Psoas muscle (tissue), 8 donors: ENCODE measurements at regions of chr9 and their contacts with region 1.

Region 1: DNA sequence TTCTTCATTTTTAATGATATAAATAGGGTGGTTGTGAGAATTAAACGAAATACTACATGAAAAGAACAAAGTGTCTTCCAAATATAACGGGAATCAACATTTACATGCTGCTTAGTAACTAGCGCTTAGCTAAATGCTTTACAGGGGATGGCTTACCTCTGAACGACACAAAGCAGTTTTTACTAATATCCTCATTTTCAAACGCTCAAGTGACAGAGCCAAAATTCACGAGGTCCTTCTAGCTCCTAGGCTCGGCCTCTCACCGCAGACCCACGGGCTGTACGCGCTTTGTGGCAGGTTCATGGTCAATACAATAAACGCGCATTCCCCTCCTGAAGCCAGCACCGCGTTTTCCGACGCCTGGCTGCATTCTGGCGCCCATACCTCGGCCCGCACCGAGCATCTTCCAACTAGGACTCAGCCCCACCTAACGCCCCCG is 442 bp downstream of the ZNF510 start:
- DNase-seq: no peak
- ATAC-seq: no peak
- H3K4me3 ChIP-seq: peak overlapping the region; percentile 85
- H3K27ac ChIP-seq: peak overlapping the region; percentile 67
- H3K4me1 ChIP-seq: peaks cover 18% of the 10 kb centered on the region
- H3K27me3 ChIP-seq: no peaks in the 10 kb centered on the region
- CTCF ChIP-seq: no peak

Region 2: GRCh38 chr9:96408409-96409280 is 368.8 kb before region 1 on chr9:
- intact Hi-C with region 1: no loop called
- DNase-seq: no peak
- ATAC-seq: no peak
- H3K4me3 ChIP-seq: no peak overlapping the region
- H3K27ac ChIP-seq: no peak overlapping the region
- H3K4me1 ChIP-seq: no peaks in the 10 kb centered on the region
- H3K27me3 ChIP-seq: no peaks in the 10 kb centered on the region
- CTCF ChIP-seq: no peak

Region 3: GRCh38 chr9:96620832-96621269 is 156.6 kb before region 1 on chr9:
- intact Hi-C with region 1: no loop called
- DNase-seq: no peak
- ATAC-seq: no peak
- H3K4me3 ChIP-seq: no peak overlapping the region
- H3K27ac ChIP-seq: no peak overlapping the region
- H3K4me1 ChIP-seq: no peaks in the 10 kb centered on the region
- H3K27me3 ChIP-seq: no peaks in the 10 kb centered on the region
- CTCF ChIP-seq: no peak

Region 4: GRCh38 chr9:96738147-96739027 is 39.1 kb before region 1 on chr9:
- intact Hi-C with region 1: no loop called
- DNase-seq: no peak
- ATAC-seq: no peak
- H3K4me3 ChIP-seq: no peak overlapping the region
- H3K27ac ChIP-seq: no peak overlapping the region
- H3K4me1 ChIP-seq: no peaks in the 10 kb centered on the region
- H3K27me3 ChIP-seq: no peaks in the 10 kb centered on the region
- CTCF ChIP-seq: no peak

Region 5: GRCh38 chr9:96888591-96888990 is 111.1 kb after region 1 on chr9:
- intact Hi-C with region 1: no loop called
- DNase-seq: no peak
- ATAC-seq: no peak
- H3K4me3 ChIP-seq: no peak overlapping the region
- H3K27ac ChIP-seq: no peak overlapping the region
- H3K4me1 ChIP-seq: no peaks in the 10 kb centered on the region
- H3K27me3 ChIP-seq: no peaks in the 10 kb centered on the region
- CTCF ChIP-seq: no peak

Region 6: GRCh38 chr9:97632985-97633858 is 855.8 kb after region 1 on chr9 and contains the starts of genes NCBP1 and TSTD2:
- intact Hi-C with region 1: loop called in 1 of 2 experiments (anchors 5 kb)
- DNase-seq: peak; percentile 97 to 99
- ATAC-seq: peak; percentile 90 to 94 (median 91)
- H3K4me3 ChIP-seq: peak within 1 kb of the TSS; percentile 90
- H3K27ac ChIP-seq: peak within 1 kb of the TSS; percentile 94
- H3K4me1 ChIP-seq: peaks cover 65% of the 10 kb centered on the region
- H3K27me3 ChIP-seq: no peaks in the 10 kb centered on the region
- CTCF ChIP-seq: no peak
- total RNA-seq, gene NCBP1: 14.6 to 22.1 (median 17.5) TPM
- total RNA-seq, gene TSTD2: 17.1 to 22.9 (median 19.4) TPM